ENCODE measurements at regions of chr1 and their contacts with region 1.

Region 1: GRCh38 chr1:160193091-160193819 is 2.9 kb downstream of the CASQ1 start:
- DNase-seq: peak; percentile 84 to 98
- H3K4me3 ChIP-seq: 0 out of 8 replicates have a peak overlapping the region, but pooled peaks of 1 of the 4 experiments have one; percentile 12
- H3K27ac ChIP-seq: no peak overlapping the region
- H3K4me1 ChIP-seq: peaks cover 3 to 26% (median 8%) of the 10 kb centered on the region in 4 experiments; a peak in 6 of 7 replicates
- H3K27me3 ChIP-seq: no peaks in the 10 kb centered on the region; a peak in 1 of 7 replicates
- CTCF ChIP-seq: peak; percentile 94 to 95 (median 94)
- EP300 ChIP-seq: no peak
- POLR2A ChIP-seq: no peak
- RAD21 ChIP-seq: peak; percentile 95 to 96

Region 2: DNA sequence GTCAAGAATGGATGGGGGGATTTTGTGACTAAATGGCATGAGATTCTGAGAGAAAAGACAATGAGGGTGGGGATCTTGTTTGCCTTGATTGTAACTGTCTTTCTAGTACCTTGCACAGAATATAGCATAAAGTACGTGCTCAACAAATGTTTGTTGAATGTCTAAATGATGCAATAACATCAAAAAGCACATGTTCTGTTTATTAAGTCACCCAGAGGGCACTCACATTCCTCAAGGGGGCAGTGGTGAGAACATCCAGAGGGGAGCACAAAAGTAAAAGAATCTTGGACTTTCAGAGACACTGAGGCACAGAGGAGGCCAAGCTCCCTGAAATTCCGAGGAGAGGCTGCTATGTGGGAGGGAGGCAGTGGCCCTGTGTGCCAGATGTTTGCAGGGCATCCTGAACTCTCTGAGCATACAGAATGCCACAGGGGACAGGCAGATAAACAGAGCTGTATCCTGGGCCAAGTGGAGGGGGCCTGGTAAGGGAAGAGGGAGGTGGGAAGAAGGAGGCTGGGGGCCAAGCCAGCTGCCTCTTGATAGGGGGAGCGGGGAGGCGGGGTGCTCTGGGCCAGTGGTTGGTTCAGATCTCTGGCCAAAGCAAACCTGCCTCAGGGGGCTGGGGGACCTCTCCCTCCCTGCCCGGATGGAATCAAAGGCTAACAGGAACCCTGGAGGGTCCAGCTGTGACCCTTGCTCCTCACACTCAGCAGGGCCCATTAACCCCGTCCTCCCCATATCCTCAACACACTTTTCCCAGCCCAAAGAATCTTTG is 84.2 kb before region 1 on chr1:
- CTCF ChIA-PET with region 1: interaction called, 36 read pairs
- POLR2A ChIA-PET with region 1: no interaction called
- DNase-seq: peak in 1 of 2 experiments; percentile 69
- H3K4me3 ChIP-seq: no peak overlapping the region
- H3K27ac ChIP-seq: no peak overlapping the region
- H3K4me1 ChIP-seq: peaks cover 8 to 32% (median 20%) of the 10 kb centered on the region in 4 experiments
- H3K27me3 ChIP-seq: no peaks in the 10 kb centered on the region; a peak in 1 of 7 replicates
- CTCF ChIP-seq: peak; percentile 4 to 73 (median 44)
- EP300 ChIP-seq: peak in 1 of 2 experiments; percentile 49; a peak in 1 of 3 replicates
- POLR2A ChIP-seq: no peak
- RAD21 ChIP-seq: peak; percentile 24 to 35; a peak in 3 of 4 replicates

Region 3: GRCh38 chr1:160161965-160162705 is 31.1 kb before region 1 on chr1:
- CTCF ChIA-PET with region 1: interaction called, 257 read pairs
- POLR2A ChIA-PET with region 1: interaction called, 4 read pairs
- DNase-seq: peak; percentile 54 to 73
- H3K4me3 ChIP-seq: no peak overlapping the region
- H3K27ac ChIP-seq: no peak overlapping the region
- H3K4me1 ChIP-seq: peaks cover 0 to 3% (median 1%) of the 10 kb centered on the region in 4 experiments; a peak in 3 of 7 replicates
- H3K27me3 ChIP-seq: no peaks in the 10 kb centered on the region; a peak in 2 of 7 replicates
- CTCF ChIP-seq: peak; percentile 87 to 98 (median 95)
- EP300 ChIP-seq: no peak
- POLR2A ChIP-seq: no peak
- RAD21 ChIP-seq: peak; percentile 93 to 96

Region 4: GRCh38 chr1:160177231-160177630 is 16.0 kb before region 1 on chr1:
- CTCF ChIA-PET with region 1: interaction called, 257 read pairs
- POLR2A ChIA-PET with region 1: interaction called, 6 read pairs
- DNase-seq: no peak
- H3K4me3 ChIP-seq: no peak overlapping the region
- H3K27ac ChIP-seq: no peak overlapping the region
- H3K4me1 ChIP-seq: peaks cover 0 to 11% (median 3%) of the 10 kb centered on the region in 4 experiments; a peak in 6 of 7 replicates
- H3K27me3 ChIP-seq: peaks cover 0 to 2% (median 0%) of the 10 kb centered on the region in 4 experiments; a peak in 1 of 7 replicates
- CTCF ChIP-seq: no peak
- EP300 ChIP-seq: no peak
- POLR2A ChIP-seq: no peak
- RAD21 ChIP-seq: no peak

Region 5: GRCh38 chr1:160211046-160211790 is 18.0 kb after region 1 on chr1:
- CTCF ChIA-PET with region 1: interaction called, 195 read pairs
- POLR2A ChIA-PET with region 1: interaction called, 61 read pairs
- DNase-seq: no peak
- H3K4me3 ChIP-seq: no peak overlapping the region
- H3K27ac ChIP-seq: peak overlapping the region; percentile 27; the same call in 1 of the 2 replicates
- H3K4me1 ChIP-seq: peaks cover 13 to 28% (median 16%) of the 10 kb centered on the region in 4 experiments
- H3K27me3 ChIP-seq: no peaks in the 10 kb centered on the region
- CTCF ChIP-seq: no peak
- EP300 ChIP-seq: no peak
- POLR2A ChIP-seq: no peak
- RAD21 ChIP-seq: no peak

Region 6: DNA sequence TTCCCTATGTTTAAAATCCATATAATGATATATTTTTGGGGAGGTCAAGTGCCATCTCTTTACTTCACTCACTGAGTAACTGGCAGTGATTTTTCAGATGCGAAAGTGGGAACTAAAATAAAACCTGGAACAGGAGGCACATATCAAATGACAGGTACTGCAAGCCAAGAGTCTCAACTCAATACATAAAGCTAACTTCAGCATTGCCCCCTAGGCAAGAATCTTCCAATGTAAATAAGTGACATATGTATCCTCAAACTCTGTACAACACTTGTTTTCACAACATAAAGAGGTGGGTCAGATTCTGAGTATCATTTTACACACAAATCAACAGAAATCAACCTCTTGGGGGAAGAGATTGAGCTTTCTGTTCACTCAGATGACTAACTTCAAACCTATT is 51.0 kb after region 1 on chr1:
- CTCF ChIA-PET with region 1: interaction called, 11 read pairs
- POLR2A ChIA-PET with region 1: no interaction called
- DNase-seq: no peak
- H3K4me3 ChIP-seq: no peak overlapping the region
- H3K27ac ChIP-seq: no peak overlapping the region
- H3K4me1 ChIP-seq: no peaks in the 10 kb centered on the region
- H3K27me3 ChIP-seq: no peaks in the 10 kb centered on the region
- CTCF ChIP-seq: no peak
- EP300 ChIP-seq: no peak
- POLR2A ChIP-seq: no peak
- RAD21 ChIP-seq: no peak

Region 7: GRCh38 chr1:160605205-160605604 is 411.9 kb after region 1 on chr1:
- CTCF ChIA-PET with region 1: no interaction called
- POLR2A ChIA-PET with region 1: no interaction called
- DNase-seq: no peak
- H3K4me3 ChIP-seq: no peak overlapping the region
- H3K27ac ChIP-seq: no peak overlapping the region
- H3K4me1 ChIP-seq: no peaks in the 10 kb centered on the region
- H3K27me3 ChIP-seq: no peaks in the 10 kb centered on the region
- CTCF ChIP-seq: peak in 1 of 3 experiments; percentile 6; a peak in 1 of 4 replicates
- EP300 ChIP-seq: no peak
- POLR2A ChIP-seq: no peak
- RAD21 ChIP-seq: no peak; a peak in 1 of 4 replicates

Measured in H1 (cell line).